Activated CD4-positive, alpha-beta memory T cell treated with anti-CD3 and anti-CD28 coated beads for 36 hours (primary cell): ENCODE measurements at regions of chr9 and their contacts with region 1.

Region 1: GRCh38 chr9:137534256-137535117 is 15.7 kb downstream of the PNPLA7 start:
- DNase-seq: peak; percentile 26
- H3K4me3 Mint-ChIP-seq: no peak overlapping the region
- H3K27ac Mint-ChIP-seq: peak overlapping the region; percentile 30
- H3K4me1 Mint-ChIP-seq: peaks cover 24% of the 10 kb centered on the region
- H3K27me3 Mint-ChIP-seq: no peaks in the 10 kb centered on the region

Region 2: DNA sequence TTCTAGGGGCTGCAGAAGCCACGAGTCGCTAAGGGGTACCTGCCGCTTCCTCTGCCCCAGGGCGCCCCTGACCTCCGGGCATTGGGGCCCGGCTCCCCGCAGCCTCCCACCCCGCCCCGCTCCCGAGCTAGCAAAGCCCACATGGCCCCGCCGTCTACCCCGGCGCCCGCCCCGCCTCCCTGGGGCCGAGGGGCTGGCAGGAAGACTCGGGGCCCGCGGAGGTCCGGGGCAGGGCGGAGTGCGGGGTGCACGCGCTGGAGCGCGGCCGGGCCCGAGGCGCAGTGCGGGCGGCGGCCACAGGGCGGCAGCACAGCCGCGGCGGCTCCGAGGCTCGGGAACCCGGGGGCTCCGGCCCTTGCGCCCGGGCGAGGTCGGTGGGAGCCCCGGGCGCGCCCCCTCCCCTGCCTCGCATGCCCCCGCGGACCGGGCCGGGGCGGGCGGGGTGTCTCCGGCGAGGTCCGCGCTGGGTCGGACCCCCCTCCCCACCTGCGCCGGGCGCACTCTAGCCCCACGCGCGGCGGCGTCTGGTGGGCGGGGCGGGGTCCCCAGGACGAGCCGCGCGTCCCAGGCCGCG is 239.2 kb before region 1 on chr9:
- CTCF ChIA-PET with region 1: no interaction called
- POLR2A ChIA-PET with region 1: no interaction called
- intact Hi-C with region 1: loop called (anchors 10 kb)
- DNase-seq: peak; percentile 57
- H3K4me3 Mint-ChIP-seq: no peak overlapping the region
- H3K27ac Mint-ChIP-seq: no peak overlapping the region
- H3K4me1 Mint-ChIP-seq: peaks cover 8% of the 10 kb centered on the region
- H3K27me3 Mint-ChIP-seq: peaks cover 34% of the 10 kb centered on the region

Region 3: DNA sequence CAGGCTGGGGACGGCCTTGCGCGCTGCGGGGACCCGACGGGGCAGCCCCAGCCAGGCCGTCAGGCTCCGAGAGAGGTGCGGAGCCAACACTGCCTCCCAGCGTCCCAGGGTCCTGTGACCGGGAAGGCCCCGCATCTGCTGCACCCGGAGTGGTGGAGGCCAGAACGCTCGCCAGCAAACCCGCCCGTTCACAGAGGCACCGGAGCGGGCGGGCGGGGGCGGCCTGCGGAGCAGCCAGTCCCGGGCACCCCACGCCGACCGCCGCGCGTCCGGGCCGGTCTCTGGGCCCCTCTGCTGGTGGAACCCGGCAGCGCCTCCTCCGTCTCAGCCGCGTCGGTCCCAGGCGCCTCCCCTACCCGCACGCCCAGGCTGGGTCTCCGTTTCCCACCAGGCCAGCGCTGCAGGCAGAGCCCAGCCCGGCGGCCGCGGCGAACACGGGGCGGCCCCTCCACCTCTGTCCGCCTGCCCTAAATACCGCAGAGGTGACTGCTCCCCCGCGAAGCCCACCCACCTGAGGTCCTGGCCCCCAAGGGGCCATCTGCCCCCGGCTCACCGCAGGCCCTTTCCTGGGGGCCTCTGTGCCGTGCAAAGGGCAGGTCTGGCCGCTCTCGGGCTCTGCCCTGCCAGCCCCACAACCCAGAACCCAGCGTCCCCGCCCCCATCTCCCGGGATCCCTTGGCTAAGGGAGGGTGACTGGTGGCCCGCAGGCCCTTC is 127.5 kb before region 1 on chr9:
- CTCF ChIA-PET with region 1: no interaction called
- POLR2A ChIA-PET with region 1: no interaction called
- intact Hi-C with region 1: no loop called
- DNase-seq: peak; percentile 77
- H3K4me3 Mint-ChIP-seq: no peak overlapping the region
- H3K27ac Mint-ChIP-seq: no peak overlapping the region
- H3K4me1 Mint-ChIP-seq: peaks cover 2% of the 10 kb centered on the region
- H3K27me3 Mint-ChIP-seq: peaks cover 3% of the 10 kb centered on the region

Region 4: DNA sequence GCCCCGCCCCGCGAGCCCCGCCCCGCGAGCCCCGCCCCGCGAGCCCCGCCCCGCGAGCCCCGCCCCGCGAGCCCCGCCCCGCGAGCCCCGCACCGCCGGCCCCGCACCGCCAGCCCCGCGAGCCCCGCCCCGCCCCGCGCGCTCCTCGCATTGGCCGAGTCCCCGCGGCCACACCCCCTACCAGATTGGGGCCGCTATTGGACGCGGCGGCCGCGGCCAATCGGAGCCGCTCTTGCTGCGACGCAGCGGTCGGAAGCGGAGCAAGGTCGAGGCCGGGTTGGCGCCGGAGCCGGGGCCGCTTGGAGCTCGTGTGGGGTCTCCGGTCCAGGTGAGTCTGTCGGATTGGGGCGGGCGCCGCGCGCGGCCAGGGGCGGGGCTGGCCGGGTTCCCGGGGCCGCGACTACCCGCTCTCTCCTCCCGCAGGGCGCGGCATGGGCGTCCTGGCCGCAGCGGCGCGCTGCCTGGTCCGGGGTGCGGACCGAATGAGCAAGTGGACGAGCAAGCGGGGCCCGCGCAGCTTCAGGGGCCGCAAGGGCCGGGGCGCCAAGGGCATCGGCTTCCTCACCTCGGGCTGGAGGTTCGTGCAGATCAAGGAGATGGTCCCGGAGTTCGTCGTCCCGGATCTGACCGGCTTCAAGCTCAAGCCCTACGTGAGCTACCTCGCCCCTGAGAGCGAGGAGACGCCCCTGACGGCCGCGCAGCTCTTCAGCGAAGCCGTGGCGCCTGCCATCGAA is 17.3 kb after region 1 on chr9 and contains the start of gene MRPL41:
- CTCF ChIA-PET with region 1: interaction called, 10 read pairs
- POLR2A ChIA-PET with region 1: no interaction called
- intact Hi-C with region 1: no loop called
- DNase-seq: peak; percentile 91
- H3K4me3 Mint-ChIP-seq: peak within 1 kb of the TSS; percentile 79
- H3K27ac Mint-ChIP-seq: peak within 1 kb of the TSS; percentile 65
- H3K4me1 Mint-ChIP-seq: peaks cover 17% of the 10 kb centered on the region
- H3K27me3 Mint-ChIP-seq: no peaks in the 10 kb centered on the region
- total RNA-seq, gene MRPL41: 48.0 to 48.8 TPM